ENCODE measurements at regions of chr6 and their contacts with region 1.

Region 1: DNA sequence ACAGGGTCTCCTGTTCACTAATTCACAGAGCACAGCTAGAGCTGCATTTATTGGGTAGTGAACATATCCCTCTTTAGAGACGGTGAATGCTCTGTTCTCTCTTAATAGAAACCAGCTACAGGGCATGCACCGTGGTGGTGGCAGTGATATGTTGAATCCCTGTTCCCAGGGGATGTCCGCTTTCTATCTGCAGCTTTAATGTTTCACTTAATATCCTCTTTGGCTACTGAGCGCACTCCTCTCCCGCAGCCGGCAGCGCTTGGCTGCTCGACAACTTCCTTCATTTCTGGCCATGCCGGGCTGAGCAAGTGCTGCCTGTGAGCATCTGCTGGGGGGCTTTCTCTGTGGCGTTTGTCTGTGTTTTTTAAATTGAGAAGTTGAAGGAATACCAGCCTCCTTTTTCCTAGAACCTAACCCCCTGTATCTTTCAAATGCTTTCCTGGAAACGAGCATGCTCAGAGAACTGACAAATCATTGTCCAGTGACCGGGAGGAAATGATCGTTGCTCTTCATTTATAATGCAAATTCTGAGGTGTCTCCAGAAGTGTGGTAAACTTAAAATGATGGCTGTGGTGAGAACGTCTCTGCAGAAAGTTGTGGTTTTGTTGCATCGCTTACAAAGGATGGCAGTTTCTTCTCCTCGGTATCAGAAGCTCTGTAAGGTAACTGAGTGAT is 297.9 kb downstream of the UTRN start:
- DNase-seq: no peak
- ATAC-seq: no peak
- H3K4me3 ChIP-seq: no peak overlapping the region
- H3K27ac ChIP-seq: no peak overlapping the region
- H3K4me1 ChIP-seq: peaks cover 32% of the 10 kb centered on the region
- H3K27me3 ChIP-seq: no peaks in the 10 kb centered on the region
- CTCF ChIP-seq: no peak
- EP300 ChIP-seq: no peak
- POLR2A ChIP-seq: no peak
- RAD21 ChIP-seq: no peak

Region 2: GRCh38 chr6:144778773-144779492 is 195.9 kb after region 1 on chr6:
- CTCF ChIA-PET with region 1: interaction called, 5 read pairs
- POLR2A ChIA-PET with region 1: no interaction called
- in situ Hi-C with region 1: no loop called
- intact Hi-C with region 1: loop called (anchors 2 kb)
- DNase-seq: no peak
- ATAC-seq: peak; percentile 75
- H3K4me3 ChIP-seq: no peak overlapping the region
- H3K27ac ChIP-seq: no peak overlapping the region
- H3K4me1 ChIP-seq: peaks cover 21% of the 10 kb centered on the region
- H3K27me3 ChIP-seq: no peaks in the 10 kb centered on the region
- CTCF ChIP-seq: peak; percentile 32
- EP300 ChIP-seq: no peak
- POLR2A ChIP-seq: no peak
- RAD21 ChIP-seq: no peak

Region 3: DNA sequence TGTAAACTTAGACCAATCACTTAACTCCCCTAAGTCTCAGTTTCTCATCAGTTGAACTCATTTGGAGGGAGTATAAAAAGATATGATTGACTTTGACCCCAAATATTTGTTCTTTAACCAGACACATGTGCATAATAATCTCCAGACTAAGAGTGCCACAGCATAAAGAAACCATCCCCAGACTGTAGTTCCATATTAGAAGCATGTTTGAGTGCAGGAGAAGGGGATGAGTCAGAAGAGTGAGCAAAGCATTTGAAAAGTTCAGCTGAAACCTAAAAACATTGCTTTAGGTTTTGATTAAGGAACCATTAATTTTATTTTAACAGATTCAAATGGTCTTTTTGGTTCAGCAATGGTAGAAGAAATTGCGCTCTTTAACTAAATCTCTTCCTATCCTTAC is 356.8 kb after region 1 on chr6:
- CTCF ChIA-PET with region 1: no interaction called
- POLR2A ChIA-PET with region 1: no interaction called
- in situ Hi-C with region 1: loop called (anchors 5 kb)
- intact Hi-C with region 1: no loop called
- DNase-seq: no peak
- ATAC-seq: no peak
- H3K4me3 ChIP-seq: no peak overlapping the region
- H3K27ac ChIP-seq: no peak overlapping the region
- H3K4me1 ChIP-seq: no peaks in the 10 kb centered on the region
- H3K27me3 ChIP-seq: no peaks in the 10 kb centered on the region
- CTCF ChIP-seq: no peak
- EP300 ChIP-seq: no peak
- POLR2A ChIP-seq: no peak
- RAD21 ChIP-seq: no peak

Region 4: GRCh38 chr6:145214570-145214969 is 631.5 kb after region 1 on chr6:
- CTCF ChIA-PET with region 1: no interaction called
- POLR2A ChIA-PET with region 1: no interaction called
- in situ Hi-C with region 1: loop called (anchors 10 kb)
- intact Hi-C with region 1: loop called (anchors 1 kb)
- DNase-seq: peak; percentile 47
- ATAC-seq: no peak
- H3K4me3 ChIP-seq: no peak overlapping the region
- H3K27ac ChIP-seq: no peak overlapping the region
- H3K4me1 ChIP-seq: no peaks in the 10 kb centered on the region
- H3K27me3 ChIP-seq: no peaks in the 10 kb centered on the region
- CTCF ChIP-seq: peak; percentile 46
- EP300 ChIP-seq: no peak
- POLR2A ChIP-seq: no peak
- RAD21 ChIP-seq: no peak

Region 5: DNA sequence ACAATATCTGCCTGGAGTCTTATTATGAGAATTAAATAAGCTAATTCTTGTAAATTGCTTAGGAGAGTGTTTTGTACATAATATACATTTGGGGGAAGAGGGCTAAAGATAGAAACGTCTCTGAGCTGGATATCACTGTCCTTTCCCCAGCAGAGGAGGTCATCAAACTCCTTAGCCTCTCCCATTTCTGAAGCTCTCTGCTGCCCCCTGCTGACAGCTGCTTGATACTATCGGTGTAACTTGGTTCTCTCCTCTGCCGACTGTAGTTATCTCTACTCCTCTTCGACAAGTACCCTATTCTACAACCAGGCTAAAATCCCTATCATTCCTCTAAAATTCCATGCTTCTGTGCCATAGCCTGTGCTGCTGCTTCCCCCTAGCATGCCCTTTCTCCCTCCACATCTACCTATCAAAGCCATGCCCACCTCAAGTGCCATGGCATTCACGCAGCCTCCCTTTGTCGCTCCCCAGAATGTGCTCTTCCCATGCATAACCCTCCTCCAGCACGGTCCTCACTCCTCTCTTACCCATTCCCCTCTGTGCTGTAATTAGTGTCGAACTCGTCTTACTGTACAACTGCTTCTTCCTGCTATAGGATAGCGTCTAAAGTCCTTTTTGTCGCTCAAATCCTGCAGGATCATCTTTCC is 1051.0 kb after region 1 on chr6:
- CTCF ChIA-PET with region 1: no interaction called
- POLR2A ChIA-PET with region 1: no interaction called
- in situ Hi-C with region 1: loop called (anchors 10 kb)
- intact Hi-C with region 1: loop called (anchors 1 kb)
- DNase-seq: peak; percentile 75
- ATAC-seq: peak; percentile 98
- H3K4me3 ChIP-seq: no peak overlapping the region
- H3K27ac ChIP-seq: no peak overlapping the region
- H3K4me1 ChIP-seq: no peaks in the 10 kb centered on the region
- H3K27me3 ChIP-seq: no peaks in the 10 kb centered on the region
- CTCF ChIP-seq: peak; percentile 94
- EP300 ChIP-seq: no peak
- POLR2A ChIP-seq: no peak
- RAD21 ChIP-seq: peak; percentile 76